ENCODE measurements at regions of chr1 and their contacts with region 1.

Region 1: GRCh38 chr1:118151312-118151937 is 33.6 kb downstream of the SPAG17 start:
- DNase-seq: peak; percentile 61
- H3K4me3 Mint-ChIP-seq: no peak overlapping the region
- H3K27ac Mint-ChIP-seq: no peak overlapping the region
- H3K4me1 Mint-ChIP-seq: peaks cover 7% of the 10 kb centered on the region
- H3K27me3 Mint-ChIP-seq: no peaks in the 10 kb centered on the region
- CTCF ChIP-seq: peak; percentile 69

Region 2: GRCh38 chr1:117271571-117272358 is 879.7 kb before region 1 on chr1:
- CTCF ChIA-PET with region 1: no interaction called
- POLR2A ChIA-PET with region 1: no interaction called
- intact Hi-C with region 1: no loop called
- DNase-seq: no peak
- H3K4me3 Mint-ChIP-seq: no peak overlapping the region
- H3K27ac Mint-ChIP-seq: no peak overlapping the region
- H3K4me1 Mint-ChIP-seq: no peaks in the 10 kb centered on the region
- H3K27me3 Mint-ChIP-seq: no peaks in the 10 kb centered on the region
- CTCF ChIP-seq: no peak

Region 3: GRCh38 chr1:118101515-118101844 is 49.9 kb before region 1 on chr1:
- CTCF ChIA-PET with region 1: no interaction called
- POLR2A ChIA-PET with region 1: no interaction called
- intact Hi-C with region 1: no loop called
- DNase-seq: peak; percentile 45
- H3K4me3 Mint-ChIP-seq: no peak overlapping the region
- H3K27ac Mint-ChIP-seq: no peak overlapping the region
- H3K4me1 Mint-ChIP-seq: peaks cover 15% of the 10 kb centered on the region
- H3K27me3 Mint-ChIP-seq: no peaks in the 10 kb centered on the region
- CTCF ChIP-seq: no peak

Region 4: DNA sequence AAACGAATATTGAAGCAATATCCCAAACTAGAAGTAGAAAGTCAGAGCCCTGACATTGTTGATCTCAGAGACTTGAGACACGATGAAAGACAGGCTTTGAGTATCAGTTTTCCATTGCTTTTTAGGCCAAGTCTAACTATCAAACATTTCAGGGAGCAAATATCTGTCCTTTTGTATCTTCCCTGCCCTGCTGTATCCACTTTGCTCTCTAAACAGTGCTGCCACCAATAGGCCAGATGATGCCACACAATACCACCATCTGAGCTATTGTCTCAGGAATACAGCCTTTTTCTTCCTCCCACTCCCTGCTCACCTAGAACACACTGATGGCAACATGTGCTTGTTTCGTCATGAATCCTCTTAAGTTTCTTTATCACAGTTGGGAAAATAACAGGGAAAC is 96.2 kb after region 1 on chr1:
- CTCF ChIA-PET with region 1: interaction called, 7 read pairs
- POLR2A ChIA-PET with region 1: no interaction called
- intact Hi-C with region 1: loop called (anchors 5 kb)
- DNase-seq: peak; percentile 57
- H3K4me3 Mint-ChIP-seq: no peak overlapping the region
- H3K27ac Mint-ChIP-seq: no peak overlapping the region
- H3K4me1 Mint-ChIP-seq: no peaks in the 10 kb centered on the region
- H3K27me3 Mint-ChIP-seq: no peaks in the 10 kb centered on the region
- CTCF ChIP-seq: peak; percentile 35

Region 5: GRCh38 chr1:118716782-118717181 is 565.4 kb after region 1 on chr1:
- CTCF ChIA-PET with region 1: interaction called, 15 read pairs
- POLR2A ChIA-PET with region 1: interaction called, 3 read pairs
- intact Hi-C with region 1: loop called (anchors 1 kb)
- DNase-seq: peak; percentile 10
- H3K4me3 Mint-ChIP-seq: no peak overlapping the region
- H3K27ac Mint-ChIP-seq: no peak overlapping the region
- H3K4me1 Mint-ChIP-seq: no peaks in the 10 kb centered on the region
- H3K27me3 Mint-ChIP-seq: no peaks in the 10 kb centered on the region
- CTCF ChIP-seq: no peak

Region 6: GRCh38 chr1:118949315-118949714 is 797.9 kb after region 1 on chr1:
- CTCF ChIA-PET with region 1: no interaction called
- POLR2A ChIA-PET with region 1: no interaction called
- intact Hi-C with region 1: loop called (anchors 10 kb)
- DNase-seq: no peak
- H3K4me3 Mint-ChIP-seq: no peak overlapping the region
- H3K27ac Mint-ChIP-seq: no peak overlapping the region
- H3K4me1 Mint-ChIP-seq: peaks cover 17% of the 10 kb centered on the region
- H3K27me3 Mint-ChIP-seq: no peaks in the 10 kb centered on the region
- CTCF ChIP-seq: no peak

Region 7: DNA sequence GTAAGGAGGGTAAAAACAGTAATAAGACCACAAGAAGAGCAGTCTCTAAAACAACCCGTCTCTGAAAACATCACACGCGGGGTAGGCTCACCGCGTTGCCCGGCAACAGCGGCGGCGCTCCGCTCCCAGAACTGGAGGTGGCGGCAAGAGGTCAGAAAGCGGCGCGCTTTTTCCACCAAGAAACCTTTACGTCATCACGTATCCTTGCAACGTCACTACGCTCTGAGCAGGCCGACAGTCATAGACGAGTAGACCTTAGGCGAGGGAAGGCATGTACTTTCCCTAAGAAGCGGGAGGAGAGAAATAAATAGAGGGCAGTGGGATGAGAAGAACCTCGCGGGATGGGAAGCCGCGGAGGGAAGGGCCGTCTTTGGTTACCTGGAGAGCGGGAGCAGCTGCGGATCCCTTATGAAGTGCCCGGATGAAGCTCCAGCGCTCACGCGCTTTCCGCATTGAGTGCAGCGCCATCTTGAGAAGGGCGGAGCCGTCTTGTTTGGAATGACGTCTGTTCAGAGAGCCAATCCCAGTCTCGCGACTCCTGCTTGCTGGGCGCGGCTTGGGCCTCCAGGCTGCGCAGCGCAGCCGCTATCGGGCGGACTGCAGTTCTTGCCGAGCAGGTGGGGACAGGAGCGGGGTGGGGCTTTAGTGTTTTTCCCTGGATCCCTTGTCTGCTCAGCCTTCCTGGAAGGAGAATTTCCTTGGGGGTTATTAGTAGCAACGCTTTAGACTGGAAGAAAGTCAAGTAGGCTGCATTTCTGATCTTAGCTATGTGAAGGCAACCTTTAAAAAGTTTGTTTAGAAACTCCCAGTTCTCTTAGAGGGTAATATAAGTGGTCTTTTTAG is 989.0 kb after region 1 on chr1 and contains the start of gene WARS2:
- CTCF ChIA-PET with region 1: interaction called, 3 read pairs
- POLR2A ChIA-PET with region 1: interaction called, 3 read pairs
- intact Hi-C with region 1: loop called (anchors 1 kb)
- DNase-seq: peak; percentile 98
- H3K4me3 Mint-ChIP-seq: no peak within 1 kb of the TSS
- H3K27ac Mint-ChIP-seq: no peak within 1 kb of the TSS
- H3K4me1 Mint-ChIP-seq: peaks cover 29% of the 10 kb centered on the region
- H3K27me3 Mint-ChIP-seq: no peaks in the 10 kb centered on the region
- CTCF ChIP-seq: no peak
- total RNA-seq, gene WARS2: 17.4 and 27.7 TPM in 2 replicates

Region 8: DNA sequence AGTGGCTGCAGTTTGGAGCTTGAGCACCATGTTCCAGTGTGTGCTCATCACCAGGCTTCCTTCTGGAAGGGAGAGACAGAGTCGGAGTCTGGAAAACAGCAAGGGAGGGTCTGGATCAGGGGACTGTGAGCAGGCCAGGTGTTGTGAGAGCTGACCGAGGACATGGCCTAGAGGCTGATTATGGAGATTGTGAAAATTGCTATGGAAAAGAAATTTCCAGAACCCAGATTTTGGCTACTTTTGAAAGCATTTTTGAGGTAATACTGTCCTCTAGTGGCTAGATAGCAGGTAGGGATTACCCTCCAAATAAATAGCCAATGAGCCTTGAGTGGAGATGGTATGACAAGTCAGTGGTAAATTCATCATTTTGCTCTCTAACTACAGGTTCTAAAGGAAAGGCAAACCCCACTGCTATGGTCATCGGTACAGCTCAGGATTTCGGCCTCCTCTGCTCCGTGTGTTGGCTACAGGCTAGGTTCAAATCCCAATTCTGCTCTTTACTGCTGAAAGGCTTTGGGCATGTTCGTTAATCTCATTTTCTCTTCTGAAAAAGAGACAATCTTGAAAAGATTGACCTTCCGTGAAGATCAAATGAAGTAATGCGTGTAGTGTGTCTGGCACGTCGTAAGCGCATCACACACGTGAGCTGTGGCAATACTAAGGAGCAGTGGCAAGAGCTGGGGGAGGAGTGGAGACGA is 1216.2 kb after region 1 on chr1:
- CTCF ChIA-PET with region 1: interaction called, 7 read pairs
- POLR2A ChIA-PET with region 1: interaction called, 3 read pairs
- intact Hi-C with region 1: loop called (anchors 1 kb)
- DNase-seq: peak; percentile 60
- H3K4me3 Mint-ChIP-seq: no peak overlapping the region
- H3K27ac Mint-ChIP-seq: no peak overlapping the region
- H3K4me1 Mint-ChIP-seq: peaks cover 14% of the 10 kb centered on the region
- H3K27me3 Mint-ChIP-seq: no peaks in the 10 kb centered on the region
- CTCF ChIP-seq: peak; percentile 94

Measured in MCF 10A (cell line).